ENCODE measurements at regions of chr18 and their contacts with region 1.

Region 1: DNA sequence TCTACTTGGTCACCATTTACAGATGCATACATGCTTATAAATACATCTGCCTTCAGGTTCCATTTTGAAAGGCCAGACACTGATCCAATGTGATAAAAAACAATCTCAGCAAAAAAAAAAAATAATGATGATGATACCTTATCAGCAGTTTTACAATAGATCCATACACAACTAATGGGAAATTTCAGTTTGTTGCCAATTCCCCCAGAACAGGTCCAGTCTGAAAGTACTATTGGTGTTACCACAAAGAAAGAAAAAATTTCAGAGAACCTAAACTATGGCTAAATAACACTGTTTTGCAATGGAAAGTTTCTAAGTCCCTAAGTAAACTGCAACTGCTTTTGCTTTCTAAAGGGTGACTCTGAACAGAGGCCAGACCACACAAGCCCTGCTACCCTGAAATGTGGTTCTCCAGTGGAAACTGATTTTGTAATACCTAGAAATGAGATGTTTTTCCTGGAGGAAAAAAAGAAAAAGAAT is 54.1 kb downstream of the LPIN2 start:
- DNase-seq: peak; percentile 76
- ATAC-seq: peak; percentile 28
- H3K4me3 Mint-ChIP-seq: peak overlapping the region; percentile 65
- H3K27ac Mint-ChIP-seq: peak overlapping the region; percentile 99
- H3K4me1 Mint-ChIP-seq: peaks cover 84% of the 10 kb centered on the region
- H3K27me3 Mint-ChIP-seq: no peaks in the 10 kb centered on the region
- CTCF ChIP-seq: no peak

Region 2: GRCh38 chr18:2932247-2933181 is 26.3 kb before region 1 on chr18:
- CTCF ChIA-PET with region 1: interaction called, 14 read pairs
- POLR2A ChIA-PET with region 1: no interaction called
- intact Hi-C with region 1: no loop called
- DNase-seq: peak; percentile 56
- ATAC-seq: peak; percentile 71
- H3K4me3 Mint-ChIP-seq: no peak overlapping the region
- H3K27ac Mint-ChIP-seq: peak overlapping the region; percentile 79
- H3K4me1 Mint-ChIP-seq: peaks cover 43% of the 10 kb centered on the region
- H3K27me3 Mint-ChIP-seq: no peaks in the 10 kb centered on the region
- CTCF ChIP-seq: peak; percentile 88

Region 3: DNA sequence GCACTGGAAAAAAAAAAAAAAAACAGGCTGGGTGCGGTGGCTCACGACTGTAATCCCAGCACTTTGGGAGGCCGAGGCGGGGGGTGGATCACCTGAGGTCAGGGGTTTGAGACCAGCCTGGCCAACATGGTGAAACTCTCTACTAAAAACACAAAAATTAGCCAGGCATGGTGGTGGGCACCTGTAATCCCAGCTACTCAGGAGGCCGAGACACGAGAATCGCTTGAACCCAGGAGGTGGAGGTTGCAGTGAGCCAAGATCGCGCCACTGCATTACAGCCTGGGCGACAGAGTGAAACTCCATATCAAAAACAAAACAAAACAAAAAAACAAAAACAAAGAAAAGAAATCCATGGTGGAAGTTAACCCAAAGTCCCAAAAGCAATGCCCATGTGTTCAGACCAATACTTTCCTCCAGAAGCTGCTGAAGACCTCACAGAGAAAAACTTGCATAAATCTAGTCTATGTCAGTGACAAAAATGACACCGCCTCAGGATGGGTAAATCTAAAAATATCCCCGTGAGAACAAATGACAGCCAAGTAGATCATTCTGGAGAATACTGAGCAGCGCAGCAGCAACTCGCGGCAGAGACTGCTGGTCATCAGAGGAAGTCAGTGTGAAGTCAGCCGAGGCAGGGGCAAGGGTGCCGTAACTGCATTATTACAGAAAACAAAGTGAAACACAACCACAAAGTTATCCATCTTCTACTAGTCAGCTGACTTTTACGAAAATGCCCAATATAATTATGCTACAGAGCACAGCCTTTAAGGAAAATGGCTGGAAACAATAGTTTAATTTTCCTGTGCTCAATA is 13.1 kb after region 1 on chr18:
- CTCF ChIA-PET with region 1: interaction called, 128 read pairs
- POLR2A ChIA-PET with region 1: interaction called, 207 read pairs
- intact Hi-C with region 1: no loop called
- DNase-seq: peak; percentile 88
- ATAC-seq: peak; percentile 78
- H3K4me3 Mint-ChIP-seq: peak overlapping the region; percentile 81
- H3K27ac Mint-ChIP-seq: peak overlapping the region; percentile 99
- H3K4me1 Mint-ChIP-seq: peaks cover 91% of the 10 kb centered on the region
- H3K27me3 Mint-ChIP-seq: no peaks in the 10 kb centered on the region
- CTCF ChIP-seq: no peak

Region 4: DNA sequence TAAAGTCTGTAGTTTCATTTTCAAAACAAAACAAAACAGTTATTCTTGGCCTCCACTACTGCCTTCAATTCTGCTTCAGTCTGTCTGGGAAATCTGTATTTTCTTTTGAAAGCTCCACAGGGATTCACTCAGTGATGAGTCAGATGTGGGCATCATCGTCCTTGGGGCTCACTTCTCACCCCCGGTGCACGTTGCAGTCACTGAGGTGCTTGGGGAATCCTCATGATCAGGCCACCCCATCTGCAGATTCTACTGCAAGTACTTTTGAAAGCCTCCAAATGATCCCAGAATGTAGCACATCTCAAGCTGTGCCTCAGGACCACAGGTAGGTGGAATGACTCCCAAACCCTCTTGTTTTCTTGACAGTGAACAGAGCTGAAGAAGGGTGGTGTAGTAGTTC is 19.8 kb after region 1 on chr18:
- CTCF ChIA-PET with region 1: interaction called, 152 read pairs
- POLR2A ChIA-PET with region 1: interaction called, 207 read pairs
- intact Hi-C with region 1: loop called (anchors 1 kb)
- DNase-seq: peak; percentile 54
- ATAC-seq: peak; percentile 9
- H3K4me3 Mint-ChIP-seq: peak overlapping the region; percentile 74
- H3K27ac Mint-ChIP-seq: peak overlapping the region; percentile 89
- H3K4me1 Mint-ChIP-seq: peaks cover 73% of the 10 kb centered on the region
- H3K27me3 Mint-ChIP-seq: no peaks in the 10 kb centered on the region
- CTCF ChIP-seq: no peak